ENCODE measurements at regions of chr2 and their contacts with region 1.

Region 1: GRCh38 chr2:64214281-64215115 is 70.3 kb upstream of the PELI1 start:
- DNase-seq: peak; percentile 38
- H3K4me3 Mint-ChIP-seq: peak overlapping the region; percentile 43
- H3K27ac Mint-ChIP-seq: peak overlapping the region; percentile 95
- H3K4me1 Mint-ChIP-seq: peaks cover 52% of the 10 kb centered on the region
- H3K27me3 Mint-ChIP-seq: no peaks in the 10 kb centered on the region

Region 2: GRCh38 chr2:64186699-64187605 is 27.5 kb before region 1 on chr2:
- CTCF ChIA-PET with region 1: no interaction called
- POLR2A ChIA-PET with region 1: no interaction called
- DNase-seq: no peak
- H3K4me3 Mint-ChIP-seq: no peak overlapping the region
- H3K27ac Mint-ChIP-seq: no peak overlapping the region
- H3K4me1 Mint-ChIP-seq: peaks cover 10% of the 10 kb centered on the region
- H3K27me3 Mint-ChIP-seq: peaks cover 7% of the 10 kb centered on the region

Region 3: GRCh38 chr2:64203858-64204632 is 10.5 kb before region 1 on chr2:
- CTCF ChIA-PET with region 1: no interaction called
- POLR2A ChIA-PET with region 1: interaction called, 28 read pairs
- DNase-seq: peak; percentile 34
- H3K4me3 Mint-ChIP-seq: peak overlapping the region; percentile 54
- H3K27ac Mint-ChIP-seq: peak overlapping the region; percentile 73
- H3K4me1 Mint-ChIP-seq: peaks cover 66% of the 10 kb centered on the region
- H3K27me3 Mint-ChIP-seq: no peaks in the 10 kb centered on the region

Region 4: DNA sequence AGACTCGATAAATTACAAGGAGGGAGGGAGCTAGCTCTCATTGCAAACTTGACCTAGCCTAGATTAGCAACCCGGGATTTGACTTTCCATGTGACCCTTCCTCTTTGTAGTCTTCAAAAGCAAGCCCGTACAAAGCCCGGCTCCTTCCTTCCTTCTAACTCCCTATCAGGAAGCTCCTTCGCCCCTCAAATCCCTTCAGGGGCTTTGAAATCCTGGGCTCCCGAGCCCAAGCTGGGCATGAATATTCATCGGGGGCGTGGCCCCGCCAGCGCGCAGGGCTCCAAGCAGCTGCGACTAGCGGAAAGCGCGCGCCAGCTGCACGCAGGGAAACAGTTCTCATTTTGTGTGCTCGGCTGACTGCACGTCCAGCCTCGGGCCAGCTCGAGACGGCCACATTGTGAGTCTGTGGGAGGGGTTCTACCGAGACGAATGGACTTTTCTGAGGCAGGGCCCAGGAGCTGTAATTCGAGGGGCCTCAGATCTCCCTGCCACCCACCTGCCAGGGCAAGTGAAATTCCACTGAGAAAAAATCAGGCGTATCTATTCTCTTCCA is 13.7 kb after region 1 on chr2:
- CTCF ChIA-PET with region 1: interaction called, 10 read pairs
- POLR2A ChIA-PET with region 1: interaction called, 29 read pairs
- DNase-seq: peak; percentile 70
- H3K4me3 Mint-ChIP-seq: peak overlapping the region; percentile 75
- H3K27ac Mint-ChIP-seq: peak overlapping the region; percentile 26
- H3K4me1 Mint-ChIP-seq: peaks cover 27% of the 10 kb centered on the region
- H3K27me3 Mint-ChIP-seq: peaks cover 2% of the 10 kb centered on the region

Region 5: DNA sequence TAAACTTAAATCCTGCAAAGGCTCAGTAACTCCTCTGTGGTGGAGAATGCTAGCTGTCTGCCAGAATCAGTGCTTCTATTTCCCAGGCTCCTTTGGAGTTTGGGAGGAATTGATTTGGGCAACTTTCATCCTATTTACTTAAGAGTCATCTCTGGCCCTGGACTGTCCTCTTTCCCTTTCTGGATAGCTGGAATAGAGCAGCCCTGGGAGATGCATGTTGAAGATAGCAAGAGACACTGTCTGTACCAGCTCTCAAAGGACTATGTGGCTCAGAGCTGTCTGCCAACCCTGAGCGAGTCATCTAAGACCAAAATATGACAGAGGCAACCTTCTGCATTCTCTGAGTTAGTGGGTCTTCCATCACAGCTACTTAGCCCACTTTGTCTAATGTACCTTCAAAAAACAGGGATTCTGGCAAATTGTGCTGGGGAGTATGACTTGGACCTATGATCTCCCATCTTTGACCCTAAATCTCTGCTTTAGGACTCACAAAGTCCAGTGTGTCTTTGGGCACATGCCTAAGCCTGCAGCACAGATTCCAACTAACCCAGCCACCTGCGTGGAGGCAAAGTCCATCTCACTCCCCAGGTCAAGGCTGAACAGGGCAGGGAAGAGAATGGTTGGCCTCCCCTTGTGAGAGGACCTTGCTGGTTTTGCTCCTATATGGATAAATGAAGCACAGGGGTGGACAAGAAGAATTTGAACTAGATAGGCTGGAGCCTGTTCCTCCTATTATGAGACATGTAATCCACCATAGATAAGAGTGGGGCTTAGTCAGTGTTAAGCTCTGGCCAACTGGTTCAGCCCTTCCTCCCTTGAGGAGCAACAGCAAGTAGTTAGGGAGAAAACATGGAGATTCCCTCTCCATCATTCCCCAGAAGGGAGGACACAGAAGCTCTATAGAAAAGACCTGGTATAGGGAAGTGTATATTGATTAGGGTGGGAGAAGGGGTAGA is 28.9 kb after region 1 on chr2:
- CTCF ChIA-PET with region 1: no interaction called
- POLR2A ChIA-PET with region 1: no interaction called
- DNase-seq: no peak
- H3K4me3 Mint-ChIP-seq: no peak overlapping the region
- H3K27ac Mint-ChIP-seq: no peak overlapping the region
- H3K4me1 Mint-ChIP-seq: no peaks in the 10 kb centered on the region
- H3K27me3 Mint-ChIP-seq: peaks cover 15% of the 10 kb centered on the region